Testis (tissue), 5 donors: ENCODE measurements at regions of chr12 and their contacts with region 1.

Region 1: DNA sequence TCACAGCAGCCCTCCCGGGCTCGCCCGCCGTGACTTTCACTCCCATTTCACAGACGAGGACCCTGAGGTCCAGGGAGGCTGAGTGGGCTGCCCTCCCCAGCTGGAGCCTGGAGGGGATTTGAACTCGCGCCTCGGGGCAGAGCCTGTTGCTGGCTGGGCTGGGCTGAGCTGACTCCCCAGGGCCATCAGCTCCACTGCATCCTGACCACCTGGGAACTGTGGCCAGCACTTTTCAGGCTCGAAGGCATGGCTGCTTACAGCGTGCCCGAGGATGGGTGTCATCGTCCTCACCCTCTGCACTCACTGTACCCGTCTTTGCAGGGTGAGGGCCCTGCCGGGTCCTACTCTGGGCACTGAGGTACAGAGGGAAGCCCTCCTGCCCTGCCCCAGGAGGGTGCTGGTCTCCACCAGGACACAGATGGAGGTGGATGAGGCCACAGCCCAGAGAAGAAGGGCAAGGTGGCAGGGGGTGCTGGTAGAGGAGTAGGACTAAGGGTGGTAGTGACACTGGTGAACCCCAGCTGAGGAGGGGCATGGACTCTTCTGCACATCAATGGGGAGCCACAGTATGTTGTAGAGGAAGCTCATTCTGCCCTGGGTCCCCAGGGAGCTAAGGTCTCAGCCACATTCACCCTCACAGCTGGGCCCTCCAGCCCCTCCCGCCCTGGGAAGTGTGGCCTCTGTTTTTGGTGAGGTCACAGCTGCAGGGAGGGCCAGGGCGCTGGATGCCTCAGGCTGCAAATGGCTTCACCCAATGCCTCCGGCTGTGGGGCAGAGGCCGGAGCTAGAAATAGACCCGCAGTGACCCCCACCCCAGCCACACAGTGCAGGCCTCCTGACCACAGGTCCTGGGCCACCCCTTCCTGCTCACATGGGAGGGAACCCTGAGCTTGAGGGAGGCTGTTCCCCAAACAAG is 365.1 kb upstream of the SFSWAP start:
- DNase-seq: no peak
- H3K4me3 ChIP-seq: no peak overlapping the region
- H3K27ac ChIP-seq: no peak overlapping the region
- H3K4me1 ChIP-seq: peaks cover 41% of the 10 kb centered on the region
- H3K27me3 ChIP-seq: no peaks in the 10 kb centered on the region
- CTCF ChIP-seq: no peak
- POLR2A ChIP-seq: no peak

Region 2: DNA sequence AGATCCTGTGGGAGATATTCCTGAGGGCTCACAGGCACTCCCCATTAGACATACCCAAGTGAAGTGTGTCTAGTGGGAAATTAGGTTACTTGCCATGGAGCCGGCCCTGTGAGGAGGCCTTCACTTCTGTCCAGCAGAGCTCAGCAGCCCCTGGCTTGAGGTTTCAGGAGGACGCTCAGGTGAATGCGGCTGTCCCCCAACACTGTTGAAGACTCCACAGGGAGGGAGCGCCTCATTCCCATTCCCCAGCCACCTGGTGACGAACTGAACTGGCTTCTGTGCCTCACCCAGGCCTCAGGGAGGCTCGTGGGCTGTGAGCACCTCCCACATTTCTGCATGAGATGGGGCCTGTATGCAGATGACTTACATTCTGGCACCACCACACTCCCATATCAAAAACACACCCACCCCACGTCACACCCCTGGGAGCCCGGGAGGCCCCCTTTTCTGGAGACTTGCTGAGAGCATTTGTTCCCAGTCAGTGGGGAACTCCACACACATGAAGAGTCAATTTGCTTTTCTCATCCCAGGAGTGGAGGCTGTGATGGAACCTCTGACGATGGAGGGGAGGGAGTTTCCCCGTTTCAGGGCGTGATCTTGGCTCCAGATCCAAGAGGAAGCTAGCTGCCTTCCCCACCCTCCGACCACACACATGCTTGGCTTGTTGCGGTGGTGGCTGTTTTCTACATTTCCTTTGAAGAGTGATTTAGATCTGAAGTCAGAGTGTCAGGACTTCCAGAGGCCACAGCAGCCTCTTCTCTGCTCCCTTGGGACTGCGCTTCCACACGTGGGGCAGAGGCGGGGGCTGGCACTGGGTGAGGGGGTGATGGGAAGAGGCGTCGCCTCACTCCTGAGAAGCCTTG is 271.3 kb before region 1 on chr12:
- intact Hi-C with region 1: no loop called
- DNase-seq: peak; percentile 45
- H3K4me3 ChIP-seq: no peak overlapping the region
- H3K27ac ChIP-seq: no peak overlapping the region
- H3K4me1 ChIP-seq: peaks cover 8% of the 10 kb centered on the region
- H3K27me3 ChIP-seq: no peaks in the 10 kb centered on the region
- CTCF ChIP-seq: no peak
- POLR2A ChIP-seq: no peak

Region 3: GRCh38 chr12:131407221-131408035 is 61.6 kb after region 1 on chr12:
- intact Hi-C with region 1: no loop called
- DNase-seq: peak; percentile 59
- H3K4me3 ChIP-seq: no peak overlapping the region
- H3K27ac ChIP-seq: no peak overlapping the region
- H3K4me1 ChIP-seq: peaks cover 13% of the 10 kb centered on the region
- H3K27me3 ChIP-seq: no peaks in the 10 kb centered on the region
- CTCF ChIP-seq: no peak
- POLR2A ChIP-seq: no peak

Region 4: GRCh38 chr12:131454418-131455217 is 108.8 kb after region 1 on chr12:
- intact Hi-C with region 1: no loop called
- DNase-seq: peak; percentile 65
- H3K4me3 ChIP-seq: no peak overlapping the region
- H3K27ac ChIP-seq: no peak overlapping the region
- H3K4me1 ChIP-seq: no peaks in the 10 kb centered on the region
- H3K27me3 ChIP-seq: no peaks in the 10 kb centered on the region
- CTCF ChIP-seq: peak; percentile 50 to 76 (median 66)
- POLR2A ChIP-seq: no peak

Region 5: GRCh38 chr12:131621701-131622421 is 276.1 kb after region 1 on chr12:
- intact Hi-C with region 1: loop called (anchors 5 kb)
- DNase-seq: peak; percentile 83
- H3K4me3 ChIP-seq: no peak overlapping the region
- H3K27ac ChIP-seq: peak overlapping the region; percentile 25 to 41
- H3K4me1 ChIP-seq: peaks cover 43% of the 10 kb centered on the region
- H3K27me3 ChIP-seq: no peaks in the 10 kb centered on the region
- CTCF ChIP-seq: no peak
- POLR2A ChIP-seq: no peak